Right lobe of liver (tissue), 6 donors: ENCODE measurements at regions of chr2 and their contacts with region 1.

Region 1: DNA sequence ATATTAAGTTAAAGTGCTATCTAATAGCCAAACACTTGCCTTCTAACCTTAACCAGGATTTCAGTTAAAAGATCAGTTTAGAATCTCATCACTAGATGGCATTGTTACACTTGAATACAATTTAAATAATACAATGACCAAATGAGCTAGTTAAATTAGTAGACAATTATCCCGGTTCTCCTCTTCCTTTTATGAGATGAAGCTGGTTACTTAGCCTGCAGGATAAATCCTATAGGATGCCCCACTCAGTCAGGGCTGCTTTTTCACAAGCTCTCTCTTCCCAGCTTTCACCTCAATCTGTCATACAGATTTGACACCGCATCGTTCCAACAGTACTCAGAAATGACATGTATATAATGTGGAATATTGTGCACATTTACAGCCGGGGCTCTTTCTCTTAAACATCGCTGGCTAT is 678.8 kb downstream of the KCNJ3 start:
- DNase-seq: no peak
- ATAC-seq: peak in 2 of 4 donors; percentile 55 to 59
- H3K4me3 ChIP-seq: no peak overlapping the region
- H3K27ac ChIP-seq: no peak overlapping the region
- H3K4me1 ChIP-seq: no peaks in the 10 kb centered on the region
- H3K27me3 ChIP-seq: no peaks in the 10 kb centered on the region
- CTCF ChIP-seq: peak; percentile 32 to 50 (median 42)
- POLR2A ChIP-seq: no peak

Region 2: GRCh38 chr2:157194097-157194688 is 1816.9 kb after region 1 on chr2:
- intact Hi-C with region 1: loop called in 1 of 2 experiments (anchors 10 kb)
- DNase-seq: no peak
- ATAC-seq: peak; percentile 69 to 86 (median 76)
- H3K4me3 ChIP-seq: no peak overlapping the region
- H3K27ac ChIP-seq: no peak overlapping the region
- H3K4me1 ChIP-seq: no peaks in the 10 kb centered on the region
- H3K27me3 ChIP-seq: no peaks in the 10 kb centered on the region
- CTCF ChIP-seq: peak; percentile 71 to 76 (median 73)
- POLR2A ChIP-seq: no peak